ENCODE measurements at regions of chr4 and their contacts with region 1.

Region 1: DNA sequence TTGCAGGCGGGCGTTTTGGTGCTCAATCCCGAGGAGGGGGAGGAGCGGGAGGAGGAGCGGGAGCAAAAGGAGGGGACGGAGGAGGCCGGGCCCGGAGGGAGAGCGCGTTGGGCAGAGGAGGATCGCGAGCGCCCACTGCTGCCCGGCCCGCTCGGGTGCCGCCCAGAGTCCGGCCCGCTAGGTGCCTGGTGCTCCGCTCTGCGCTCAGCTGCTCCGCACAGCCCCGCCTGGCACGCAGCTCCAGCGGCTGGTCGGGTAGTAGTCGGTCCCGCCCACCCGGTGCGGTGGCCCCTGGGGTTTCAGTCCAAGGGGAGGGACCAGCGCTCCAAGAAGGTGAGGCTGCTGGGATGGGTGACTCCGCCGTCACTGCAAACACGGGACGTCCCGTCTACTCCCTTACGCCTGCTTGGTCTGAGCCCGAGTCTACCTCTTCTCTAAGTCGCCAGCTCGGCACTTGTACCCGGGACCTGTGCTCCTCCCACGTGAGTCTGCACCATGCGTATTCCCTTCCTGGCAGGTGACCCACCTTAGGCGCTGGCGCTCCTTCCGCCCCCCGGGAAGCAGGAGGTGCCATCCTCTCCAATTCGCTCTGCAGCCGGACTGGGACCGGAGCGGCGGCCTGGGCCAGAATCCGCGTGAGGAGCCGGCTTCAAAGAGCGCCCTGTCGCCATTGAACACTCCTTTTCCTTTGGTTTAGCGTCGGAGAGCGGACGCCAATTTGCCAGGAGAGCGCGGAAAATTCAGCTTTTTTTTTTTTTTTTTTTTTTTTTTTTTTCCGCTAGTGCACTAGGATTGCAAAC is 405 bp upstream of the HS3ST1 start:
- DNase-seq: peak; percentile 72
- ATAC-seq: peak; percentile 90
- H3K4me3 Mint-ChIP-seq: peak overlapping the region; percentile 91
- H3K27ac Mint-ChIP-seq: peak overlapping the region; percentile 80
- H3K4me1 Mint-ChIP-seq: peaks cover 83% of the 10 kb centered on the region
- H3K27me3 Mint-ChIP-seq: peaks cover 2% of the 10 kb centered on the region
- CTCF ChIP-seq: no peak

Region 2: DNA sequence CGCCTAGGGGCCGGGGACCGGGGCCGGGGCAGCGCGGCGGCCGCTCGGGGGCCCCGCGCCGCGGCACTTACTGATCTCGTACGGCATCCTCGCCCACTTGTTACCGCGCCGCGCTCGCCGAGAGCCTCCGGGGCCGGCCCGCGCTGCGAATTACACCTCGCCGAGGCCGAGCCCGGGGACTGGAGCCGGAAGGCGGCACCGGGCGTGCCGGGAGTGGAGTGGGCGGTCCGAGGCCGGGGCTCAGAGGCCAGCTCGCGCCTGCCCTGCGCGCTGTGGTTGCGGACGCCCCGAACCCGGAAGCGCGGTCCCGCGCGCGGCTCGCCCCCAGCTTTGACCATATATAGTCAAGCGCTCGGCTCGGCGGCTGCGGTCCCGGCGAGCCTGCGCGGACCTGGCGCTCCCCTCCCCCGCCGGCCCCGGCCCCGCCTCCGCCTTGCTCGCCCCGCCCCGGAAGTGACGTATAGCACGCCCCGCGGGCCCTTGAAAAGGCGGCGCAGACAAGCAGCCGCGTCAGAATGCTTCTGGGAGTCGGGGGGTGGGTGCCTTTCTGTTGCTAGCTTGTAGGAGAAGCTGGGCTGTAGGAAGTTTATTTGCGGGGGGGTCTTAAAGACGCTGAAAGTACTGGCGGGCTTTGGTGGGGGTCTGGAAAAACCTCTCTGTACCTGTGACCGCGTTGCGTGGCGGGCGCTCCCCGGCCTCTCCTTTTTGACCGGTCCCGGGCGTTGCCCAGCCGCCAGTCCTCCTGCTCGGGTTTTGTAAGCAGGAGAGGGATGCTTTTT is 1312.3 kb before region 1 on chr4 and contains the start of gene WDR1:
- CTCF ChIA-PET with region 1: no interaction called
- POLR2A ChIA-PET with region 1: no interaction called
- intact Hi-C with region 1: loop called (anchors 2 kb)
- DNase-seq: peak; percentile 90
- ATAC-seq: peak; percentile 86
- H3K4me3 Mint-ChIP-seq: peak within 1 kb of the TSS; percentile 91
- H3K27ac Mint-ChIP-seq: peak within 1 kb of the TSS; percentile 98
- H3K4me1 Mint-ChIP-seq: peaks cover 62% of the 10 kb centered on the region
- H3K27me3 Mint-ChIP-seq: no peaks in the 10 kb centered on the region
- CTCF ChIP-seq: no peak
- total RNA-seq, gene WDR1: 337 and 348 TPM in 2 replicates

Region 3: DNA sequence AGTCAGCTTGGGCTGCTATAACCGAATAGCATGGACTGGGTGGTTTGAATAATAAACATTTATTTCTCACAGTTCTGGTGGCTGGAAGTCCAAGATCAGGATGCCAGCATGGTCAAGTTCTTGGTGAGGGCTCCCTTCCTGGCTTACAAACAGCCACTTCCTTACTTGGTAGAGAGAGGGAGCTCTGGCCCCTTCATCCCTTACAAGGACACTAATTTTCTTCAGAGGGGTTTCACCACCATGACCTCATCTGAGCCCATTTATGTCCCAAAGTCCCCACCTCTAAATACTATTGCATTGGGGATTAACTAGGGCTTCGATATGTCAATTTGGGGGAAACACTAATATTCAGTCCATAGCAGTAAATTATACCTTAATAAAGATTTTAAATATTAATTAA is 806.4 kb before region 1 on chr4:
- CTCF ChIA-PET with region 1: interaction called, 8 read pairs
- POLR2A ChIA-PET with region 1: no interaction called
- intact Hi-C with region 1: loop called (anchors 1 kb)
- DNase-seq: no peak
- ATAC-seq: peak; percentile 49
- H3K4me3 Mint-ChIP-seq: no peak overlapping the region
- H3K27ac Mint-ChIP-seq: no peak overlapping the region
- H3K4me1 Mint-ChIP-seq: peaks cover 14% of the 10 kb centered on the region
- H3K27me3 Mint-ChIP-seq: no peaks in the 10 kb centered on the region
- CTCF ChIP-seq: no peak

Region 4: DNA sequence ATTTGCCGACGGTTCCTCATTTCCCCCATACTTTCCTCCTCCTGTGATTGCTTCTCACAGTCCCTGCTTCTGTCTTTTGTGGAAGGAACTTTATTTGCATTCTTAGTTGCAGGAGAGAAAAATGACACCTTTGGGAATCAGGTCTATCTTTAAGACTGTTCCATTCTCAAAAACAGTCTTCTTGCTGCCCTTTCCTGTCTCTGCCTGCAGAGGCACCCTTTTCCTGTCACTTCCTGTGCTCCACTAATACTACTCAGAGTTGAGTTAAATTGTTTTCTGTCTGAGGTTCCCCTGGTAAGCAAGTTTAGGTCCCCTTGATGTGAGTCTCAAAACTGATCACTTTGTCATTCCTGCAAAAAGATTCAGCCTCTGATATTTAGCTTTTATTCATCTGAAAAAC is 535.7 kb before region 1 on chr4:
- CTCF ChIA-PET with region 1: interaction called, 6 read pairs
- POLR2A ChIA-PET with region 1: no interaction called
- intact Hi-C with region 1: loop called (anchors 1 kb)
- DNase-seq: no peak
- ATAC-seq: no peak
- H3K4me3 Mint-ChIP-seq: no peak overlapping the region
- H3K27ac Mint-ChIP-seq: no peak overlapping the region
- H3K4me1 Mint-ChIP-seq: peaks cover 18% of the 10 kb centered on the region
- H3K27me3 Mint-ChIP-seq: no peaks in the 10 kb centered on the region
- CTCF ChIP-seq: no peak

Region 5: DNA sequence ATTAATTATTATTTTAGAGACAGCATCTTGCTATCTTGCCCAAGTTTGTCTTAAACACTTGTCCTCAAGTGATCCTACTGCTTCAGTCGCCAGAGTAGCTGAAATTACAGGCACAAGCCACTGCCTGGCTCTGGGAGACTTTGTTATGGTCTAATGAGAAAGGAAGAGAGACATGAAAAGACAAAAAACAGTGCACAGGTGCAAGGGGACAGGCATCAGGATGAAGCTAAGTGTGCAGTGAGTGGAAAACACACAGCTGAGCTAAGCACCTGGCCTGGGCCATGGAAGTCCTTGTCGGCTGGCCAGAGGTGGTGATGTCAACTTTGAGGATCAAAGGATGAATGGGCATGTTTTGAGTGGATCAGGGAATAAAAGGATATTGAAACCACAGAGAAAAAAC is 103.1 kb before region 1 on chr4:
- CTCF ChIA-PET with region 1: no interaction called
- POLR2A ChIA-PET with region 1: no interaction called
- intact Hi-C with region 1: no loop called
- DNase-seq: no peak
- ATAC-seq: no peak
- H3K4me3 Mint-ChIP-seq: no peak overlapping the region
- H3K27ac Mint-ChIP-seq: no peak overlapping the region
- H3K4me1 Mint-ChIP-seq: peaks cover 8% of the 10 kb centered on the region
- H3K27me3 Mint-ChIP-seq: no peaks in the 10 kb centered on the region
- CTCF ChIP-seq: no peak

Region 6: GRCh38 chr4:11471618-11472017 is 42.5 kb after region 1 on chr4:
- CTCF ChIA-PET with region 1: no interaction called
- POLR2A ChIA-PET with region 1: interaction called, 6 read pairs
- intact Hi-C with region 1: loop called (anchors 1 kb)
- DNase-seq: no peak
- ATAC-seq: peak; percentile 87
- H3K4me3 Mint-ChIP-seq: peak overlapping the region; percentile 81
- H3K27ac Mint-ChIP-seq: peak overlapping the region; percentile 96
- H3K4me1 Mint-ChIP-seq: peaks cover 56% of the 10 kb centered on the region
- H3K27me3 Mint-ChIP-seq: no peaks in the 10 kb centered on the region
- CTCF ChIP-seq: no peak

Region 7: GRCh38 chr4:11765849-11766453 is 336.9 kb after region 1 on chr4:
- CTCF ChIA-PET with region 1: no interaction called
- POLR2A ChIA-PET with region 1: no interaction called
- intact Hi-C with region 1: no loop called
- DNase-seq: no peak
- ATAC-seq: no peak
- H3K4me3 Mint-ChIP-seq: no peak overlapping the region
- H3K27ac Mint-ChIP-seq: no peak overlapping the region
- H3K4me1 Mint-ChIP-seq: no peaks in the 10 kb centered on the region
- H3K27me3 Mint-ChIP-seq: peaks cover 3% of the 10 kb centered on the region
- CTCF ChIP-seq: peak; percentile 56

Region 8: DNA sequence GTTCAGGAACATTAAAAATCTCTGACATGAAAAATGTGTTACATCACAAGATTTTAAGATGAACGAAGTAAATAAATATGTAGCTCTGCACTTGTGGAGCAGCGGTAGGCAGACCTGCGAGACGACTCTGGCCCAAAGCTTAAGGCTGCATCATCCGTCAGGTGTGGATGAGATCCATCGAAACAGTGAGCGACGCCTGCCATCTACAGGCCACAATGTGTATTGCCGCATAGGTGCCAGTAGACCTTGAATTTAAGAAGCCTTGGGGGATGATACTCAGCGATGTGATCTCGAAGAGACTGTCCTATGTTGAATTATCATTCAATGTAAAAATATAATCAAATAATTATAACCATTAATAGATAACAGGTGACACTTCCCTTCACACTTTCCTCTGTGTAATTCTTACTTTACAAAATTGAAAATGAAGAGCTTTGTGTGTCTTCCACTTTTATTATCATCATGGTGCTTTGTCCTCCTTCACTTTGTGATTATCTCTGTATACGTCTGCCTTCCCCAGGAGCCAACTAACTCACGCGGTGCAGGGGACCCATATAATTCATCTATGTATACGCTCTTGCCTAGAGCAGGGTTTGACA is 1204.1 kb after region 1 on chr4:
- CTCF ChIA-PET with region 1: no interaction called
- POLR2A ChIA-PET with region 1: no interaction called
- intact Hi-C with region 1: loop called (anchors 2 kb)
- DNase-seq: peak; percentile 51
- ATAC-seq: peak; percentile 82
- H3K4me3 Mint-ChIP-seq: no peak overlapping the region
- H3K27ac Mint-ChIP-seq: no peak overlapping the region
- H3K4me1 Mint-ChIP-seq: no peaks in the 10 kb centered on the region
- H3K27me3 Mint-ChIP-seq: peaks cover 4% of the 10 kb centered on the region
- CTCF ChIP-seq: peak; percentile 17

Measured in activated B cell treated with CpG ODN at 0.5 μM for 24 hours (primary cell).